AG04450 (cell line): ENCODE measurements at regions of chr22 and their contacts with region 1.

Region 1: DNA sequence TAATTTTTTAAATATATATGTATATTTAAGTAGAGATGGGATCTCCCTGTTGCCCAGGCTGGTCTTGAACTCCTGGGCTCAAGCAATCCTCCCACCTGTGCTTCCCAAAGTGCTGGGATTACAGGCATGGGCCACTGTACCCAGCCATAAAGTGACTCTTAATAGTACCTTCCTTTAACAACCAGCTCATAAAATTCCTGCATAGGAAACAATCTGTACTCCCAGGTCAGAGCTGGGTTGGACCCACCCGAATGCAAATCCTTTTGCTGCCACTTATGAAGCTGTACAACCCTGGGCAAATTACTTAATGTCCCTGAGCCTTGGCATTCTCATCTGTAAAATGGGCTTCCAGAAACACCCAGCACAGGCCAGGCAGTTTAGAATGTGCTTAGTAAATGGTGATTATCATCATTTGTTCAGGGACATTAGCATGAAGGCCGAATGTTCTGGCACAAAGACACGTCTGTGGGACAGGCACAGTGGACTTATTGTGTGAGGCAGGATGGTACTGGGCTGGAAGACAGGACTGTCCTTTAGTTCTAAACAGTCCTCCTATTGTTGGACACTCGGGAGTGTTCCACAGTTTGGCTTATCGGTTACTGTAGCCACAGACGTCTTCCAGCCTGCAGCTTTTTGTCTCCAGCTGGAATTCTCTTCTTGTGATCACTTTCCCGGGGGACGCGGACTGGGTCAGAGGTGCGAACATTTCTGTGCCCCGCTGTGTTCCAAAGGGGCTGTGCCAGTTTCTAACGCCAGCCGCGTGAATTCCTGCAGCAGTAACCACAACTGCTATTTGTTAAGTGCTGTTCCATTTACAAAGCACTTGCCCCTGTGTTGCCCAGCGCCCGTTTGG is 6.0 kb downstream of the PDXP start:
- DNase-seq: no peak
- H3K4me3 ChIP-seq: no peak overlapping the region
- H3K27ac ChIP-seq: peak overlapping the region; percentile 21
- H3K27me3 ChIP-seq: no peaks in the 10 kb centered on the region
- CTCF ChIP-seq: no peak

Region 2: DNA sequence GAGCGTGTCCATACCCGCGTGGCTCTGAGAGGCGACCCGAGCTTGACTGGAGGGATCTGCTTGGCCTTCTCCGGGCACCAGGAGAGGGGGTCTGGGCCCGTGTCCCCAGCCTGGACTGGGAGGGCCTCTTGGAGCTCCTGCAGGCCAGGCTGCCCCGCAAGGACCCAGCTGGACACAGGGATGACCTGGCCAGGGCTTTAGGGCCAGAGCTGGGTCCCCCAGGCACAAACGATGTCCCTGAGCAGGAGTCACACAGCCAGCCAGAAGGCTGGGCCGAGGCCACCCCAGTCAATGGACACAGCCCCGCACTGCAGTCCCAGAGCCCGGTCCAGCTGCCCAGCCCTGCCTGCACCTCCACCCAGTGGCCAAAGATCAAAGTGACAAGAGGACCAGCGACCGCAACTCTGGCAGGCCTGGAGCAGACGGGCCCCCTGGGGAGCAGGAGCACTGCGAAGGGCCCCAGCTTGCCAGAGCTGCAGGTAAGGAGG is 70.5 kb after region 1 on chr22:
- CTCF ChIA-PET with region 1: interaction called, 3 read pairs
- POLR2A ChIA-PET with region 1: interaction called, 11 read pairs
- DNase-seq: no peak
- H3K4me3 ChIP-seq: no peak overlapping the region
- H3K27ac ChIP-seq: no peak overlapping the region
- H3K27me3 ChIP-seq: no peaks in the 10 kb centered on the region
- CTCF ChIP-seq: peak; percentile 32; the same call in 1 of the 2 replicates